PC-3 (cell line): ENCODE measurements at regions of chr11 and their contacts with region 1.

Region 1: DNA sequence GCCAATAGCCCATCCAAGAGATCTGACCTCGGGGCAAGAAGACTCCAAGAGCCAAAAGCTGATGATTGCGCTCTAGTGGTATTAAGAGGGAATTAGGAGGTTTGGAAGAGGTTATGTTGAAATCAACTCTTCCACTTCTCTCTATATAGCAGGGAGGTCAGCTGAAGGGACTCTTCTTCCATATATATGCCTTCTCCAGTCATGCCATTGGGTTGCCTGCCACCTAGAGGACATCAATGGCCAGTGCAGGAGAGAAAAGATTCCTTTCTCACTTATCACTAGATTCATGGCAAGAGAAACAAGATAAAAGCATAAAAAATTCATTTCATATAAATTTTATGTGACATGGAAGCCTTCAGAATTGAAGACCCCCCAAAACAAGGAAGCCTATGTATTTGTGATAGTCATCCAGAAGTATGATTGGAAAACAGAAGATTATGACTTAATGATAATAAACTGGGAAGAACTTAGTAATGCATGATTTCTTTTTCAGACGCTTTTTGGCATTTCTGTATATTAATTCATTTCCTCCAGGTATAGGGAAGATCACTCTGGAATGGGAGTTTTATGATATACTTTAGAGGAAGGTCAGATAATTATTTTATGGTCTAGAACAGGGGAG is 435.1 kb upstream of the DDI1 start:
- DNase-seq: peak; percentile 88
- ATAC-seq: peak; percentile 94
- H3K4me3 ChIP-seq: no peak overlapping the region
- H3K27ac ChIP-seq: no peak overlapping the region
- H3K4me1 ChIP-seq: no peaks in the 10 kb centered on the region
- H3K27me3 ChIP-seq: no peaks in the 10 kb centered on the region
- CTCF ChIP-seq: peak; percentile 98

Region 2: DNA sequence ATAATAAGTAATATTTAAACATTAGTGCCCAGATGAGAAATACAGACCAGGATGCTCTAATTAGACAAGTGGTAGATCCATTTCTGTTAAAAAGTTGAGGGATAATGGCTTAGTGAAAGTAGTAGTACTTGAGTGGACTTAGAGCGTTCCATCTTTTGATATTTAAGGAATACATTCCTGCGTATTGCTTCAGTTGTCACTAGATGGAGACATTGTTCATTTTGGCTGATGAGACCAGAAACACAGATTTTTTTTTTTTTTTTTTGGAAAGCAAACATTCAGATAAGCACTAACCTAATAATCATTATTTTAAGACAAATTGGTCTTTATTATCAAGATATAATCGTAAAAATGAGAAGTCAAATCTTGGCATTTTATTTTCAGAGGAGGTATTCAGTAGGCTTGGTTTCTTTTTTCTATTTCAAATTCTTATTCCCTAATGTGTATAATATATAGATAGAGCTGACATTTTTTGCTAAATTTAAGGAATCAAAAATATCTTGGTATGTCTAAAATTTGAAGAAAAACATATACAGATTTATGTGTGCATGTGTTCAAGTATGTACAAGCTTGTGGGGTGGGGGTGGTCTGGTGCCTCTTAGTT is 399.2 kb before region 1 on chr11:
- CTCF ChIA-PET with region 1: no interaction called
- POLR2A ChIA-PET with region 1: no interaction called
- intact Hi-C with region 1: loop called (anchors 1 kb)
- DNase-seq: peak; percentile 74
- ATAC-seq: peak; percentile 67
- H3K4me3 ChIP-seq: no peak overlapping the region
- H3K27ac ChIP-seq: no peak overlapping the region
- H3K4me1 ChIP-seq: no peaks in the 10 kb centered on the region
- H3K27me3 ChIP-seq: no peaks in the 10 kb centered on the region
- CTCF ChIP-seq: peak; percentile 90

Region 3: GRCh38 chr11:103257360-103257759 is 344.0 kb before region 1 on chr11:
- CTCF ChIA-PET with region 1: no interaction called
- POLR2A ChIA-PET with region 1: no interaction called
- intact Hi-C with region 1: loop called (anchors 1 kb)
- DNase-seq: peak; percentile 67
- ATAC-seq: peak; percentile 86
- H3K4me3 ChIP-seq: no peak overlapping the region
- H3K27ac ChIP-seq: no peak overlapping the region
- H3K4me1 ChIP-seq: no peaks in the 10 kb centered on the region
- H3K27me3 ChIP-seq: no peaks in the 10 kb centered on the region
- CTCF ChIP-seq: peak; percentile 75

Region 4: DNA sequence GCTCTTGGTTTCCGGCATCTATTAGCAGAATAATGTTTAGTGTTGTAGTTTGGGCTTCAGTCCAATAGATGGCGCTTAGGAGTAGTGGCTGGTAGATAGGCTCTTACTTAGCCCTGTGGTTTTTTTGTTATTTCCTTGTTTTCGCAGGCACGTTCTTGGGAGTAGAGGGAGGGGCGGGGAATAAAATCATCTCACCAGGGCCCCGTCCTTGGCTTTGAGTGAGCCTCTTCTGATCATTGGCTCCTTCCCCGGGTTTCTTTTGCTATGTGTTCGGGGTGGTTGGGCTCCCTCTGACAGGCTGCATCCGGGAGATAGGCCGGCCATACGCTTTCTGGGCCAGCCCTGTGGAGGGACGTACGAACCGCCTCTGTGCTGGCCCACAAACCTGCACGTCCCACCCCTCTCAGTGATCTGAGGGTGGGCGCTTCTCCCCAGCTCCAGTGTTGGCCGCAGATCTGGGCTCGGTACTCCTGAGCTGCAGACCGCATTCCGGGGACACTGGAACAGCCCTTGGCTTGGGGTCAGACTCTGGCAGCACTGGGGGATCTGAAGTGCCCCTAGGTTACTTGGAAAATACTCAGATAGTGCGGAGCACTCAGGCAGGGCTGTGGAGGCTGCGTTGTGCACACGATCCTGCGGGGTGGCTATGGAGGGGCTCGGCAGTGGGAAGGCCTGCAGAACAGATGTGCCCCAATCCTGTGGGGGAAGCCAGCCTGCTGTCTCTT is 275.1 kb before region 1 on chr11:
- CTCF ChIA-PET with region 1: no interaction called
- POLR2A ChIA-PET with region 1: no interaction called
- intact Hi-C with region 1: loop called (anchors 1 kb)
- DNase-seq: peak; percentile 92
- ATAC-seq: peak; percentile 97
- H3K4me3 ChIP-seq: no peak overlapping the region
- H3K27ac ChIP-seq: no peak overlapping the region
- H3K4me1 ChIP-seq: no peaks in the 10 kb centered on the region; the same call in 1 of the 2 replicates
- H3K27me3 ChIP-seq: no peaks in the 10 kb centered on the region
- CTCF ChIP-seq: peak; percentile 91

Region 5: GRCh38 chr11:103464420-103464819 is 136.9 kb before region 1 on chr11:
- CTCF ChIA-PET with region 1: no interaction called
- POLR2A ChIA-PET with region 1: no interaction called
- intact Hi-C with region 1: loop called (anchors 1 kb)
- DNase-seq: peak; percentile 17
- ATAC-seq: no peak
- H3K4me3 ChIP-seq: no peak overlapping the region
- H3K27ac ChIP-seq: no peak overlapping the region
- H3K4me1 ChIP-seq: no peaks in the 10 kb centered on the region
- H3K27me3 ChIP-seq: no peaks in the 10 kb centered on the region
- CTCF ChIP-seq: peak; percentile 57

Region 6: DNA sequence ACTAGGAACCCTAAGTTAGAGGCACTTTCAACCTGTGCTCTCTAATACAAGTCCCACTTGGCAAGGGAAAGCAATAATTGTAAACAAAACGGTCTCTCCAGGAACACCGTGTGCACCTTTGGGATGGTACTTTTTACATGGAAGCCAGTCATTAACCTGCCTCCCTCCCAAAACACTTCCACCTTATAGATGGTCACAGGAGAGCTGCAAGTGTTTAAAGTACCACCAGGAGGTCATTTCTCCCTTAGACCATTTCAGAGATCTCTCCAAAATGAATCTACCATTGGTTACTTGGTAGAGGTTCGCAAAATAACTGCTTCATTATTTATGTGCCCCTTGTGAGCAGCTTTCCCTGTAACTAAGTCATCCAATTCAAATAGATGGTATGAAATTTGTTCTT is 116.8 kb before region 1 on chr11:
- CTCF ChIA-PET with region 1: no interaction called
- POLR2A ChIA-PET with region 1: no interaction called
- intact Hi-C with region 1: loop called (anchors 5 kb)
- DNase-seq: no peak
- ATAC-seq: no peak
- H3K4me3 ChIP-seq: no peak overlapping the region
- H3K27ac ChIP-seq: no peak overlapping the region
- H3K4me1 ChIP-seq: peaks cover 49% of the 10 kb centered on the region
- H3K27me3 ChIP-seq: no peaks in the 10 kb centered on the region
- CTCF ChIP-seq: peak; percentile 41; the same call in 1 of the 2 replicates

Region 7: GRCh38 chr11:103546236-103546635 is 55.1 kb before region 1 on chr11:
- CTCF ChIA-PET with region 1: interaction called, 4 read pairs
- POLR2A ChIA-PET with region 1: no interaction called
- intact Hi-C with region 1: loop called (anchors 5 kb)
- DNase-seq: peak; percentile 88
- ATAC-seq: peak; percentile 92
- H3K4me3 ChIP-seq: no peak overlapping the region
- H3K27ac ChIP-seq: no peak overlapping the region
- H3K4me1 ChIP-seq: peaks cover 12% of the 10 kb centered on the region
- H3K27me3 ChIP-seq: no peaks in the 10 kb centered on the region
- CTCF ChIP-seq: no peak

Region 8: DNA sequence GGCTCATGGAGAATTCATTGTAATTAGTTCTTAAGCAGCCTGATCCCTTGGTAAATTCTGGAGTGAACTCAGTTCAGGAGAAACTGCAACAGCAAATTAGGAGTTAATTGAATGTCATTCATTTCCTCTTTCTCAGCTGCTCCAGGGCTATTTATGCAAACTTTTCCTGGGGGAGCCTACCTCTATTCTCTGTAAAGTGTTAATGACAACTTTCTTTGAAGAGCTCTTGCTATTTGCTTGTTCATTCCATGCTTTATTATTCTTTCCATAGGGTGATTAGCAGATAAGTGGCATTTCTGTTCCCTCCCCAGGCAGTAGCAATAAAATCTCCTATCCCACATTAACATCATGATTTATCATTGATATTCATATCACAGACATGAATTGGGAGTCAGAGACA is 167.5 kb after region 1 on chr11:
- CTCF ChIA-PET with region 1: no interaction called
- POLR2A ChIA-PET with region 1: no interaction called
- intact Hi-C with region 1: no loop called
- DNase-seq: no peak
- ATAC-seq: no peak
- H3K4me3 ChIP-seq: no peak overlapping the region
- H3K27ac ChIP-seq: no peak overlapping the region
- H3K4me1 ChIP-seq: no peaks in the 10 kb centered on the region
- H3K27me3 ChIP-seq: no peaks in the 10 kb centered on the region
- CTCF ChIP-seq: no peak